ENCODE measurements at regions of chr4 and their contacts with region 1.

Region 1: DNA sequence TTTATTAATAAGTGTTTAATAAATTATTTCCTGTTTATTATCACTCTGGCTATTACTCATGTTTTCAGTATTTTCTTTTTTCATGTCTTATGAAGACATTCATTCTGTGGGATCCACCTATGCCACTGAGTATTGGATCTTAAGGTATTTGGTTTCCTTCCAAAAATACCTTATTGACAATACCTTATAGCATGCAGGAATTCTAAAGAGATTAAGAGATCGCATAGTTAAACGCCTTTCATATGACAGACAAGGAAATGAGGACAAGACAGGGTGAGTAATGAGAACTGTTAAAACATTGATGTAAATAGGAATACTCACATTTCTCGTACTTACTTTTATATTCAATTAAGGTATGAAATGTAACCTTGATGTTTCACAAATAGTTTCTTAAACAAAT is 38.2 kb upstream of the TMPRSS11B start:
- DNase-seq: no peak
- H3K4me3 ChIP-seq: no peak overlapping the region
- H3K27ac ChIP-seq: no peak overlapping the region
- H3K4me1 ChIP-seq: no peaks in the 10 kb centered on the region
- H3K27me3 ChIP-seq: no peaks in the 10 kb centered on the region
- CTCF ChIP-seq: no peak
- POLR2A ChIP-seq: no peak

Region 2: GRCh38 chr4:67531379-67531962 is 752.2 kb before region 1 on chr4:
- intact Hi-C with region 1: loop called (anchors 5 kb)
- DNase-seq: no peak
- H3K4me3 ChIP-seq: no peak overlapping the region
- H3K27ac ChIP-seq: no peak overlapping the region
- H3K4me1 ChIP-seq: no peaks in the 10 kb centered on the region
- H3K27me3 ChIP-seq: no peaks in the 10 kb centered on the region
- CTCF ChIP-seq: no peak
- POLR2A ChIP-seq: no peak

Region 3: DNA sequence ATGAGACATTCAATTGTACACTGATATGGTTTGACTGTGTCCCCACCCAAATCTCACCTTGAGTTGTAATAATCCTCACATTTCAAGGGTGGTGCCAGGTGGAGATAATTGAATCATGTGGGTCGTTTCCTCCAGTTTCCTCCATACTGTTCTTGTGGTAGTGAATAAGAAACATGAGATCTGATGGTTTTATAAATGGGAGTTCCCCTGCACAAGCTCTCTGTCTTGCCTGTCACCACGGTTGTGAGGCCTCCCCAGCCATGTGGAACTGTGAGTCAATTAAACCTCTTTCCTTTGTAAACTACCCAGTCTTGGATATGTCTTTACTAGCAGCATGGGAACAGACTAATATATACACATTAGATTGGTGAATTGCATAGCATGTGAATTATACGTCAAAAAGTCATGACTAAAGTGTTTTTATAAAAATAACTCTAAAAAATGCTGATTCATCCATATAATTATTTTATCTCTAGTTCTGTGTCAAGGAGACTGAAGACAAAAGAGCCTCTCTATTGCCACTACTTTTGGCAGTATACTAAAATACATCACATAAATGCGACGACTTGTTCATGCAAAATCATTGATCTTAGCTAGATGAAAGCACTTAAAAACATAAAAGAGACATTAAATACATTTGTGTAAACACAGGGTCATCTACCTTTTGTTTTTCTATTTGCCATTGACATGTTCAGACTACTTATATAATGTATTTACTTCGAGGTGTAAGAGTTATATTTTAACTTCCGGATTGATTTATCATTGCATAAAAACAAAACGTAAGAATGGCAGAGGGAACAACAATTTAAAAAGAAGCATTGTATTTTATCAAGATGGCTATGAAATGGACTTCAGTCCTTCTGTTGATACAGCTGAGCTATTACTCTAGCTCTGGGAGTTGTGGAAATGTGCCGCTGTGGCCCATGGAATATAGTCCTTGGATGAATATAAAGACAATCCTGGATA is 16.1 kb after region 1 on chr4:
- intact Hi-C with region 1: no loop called
- DNase-seq: no peak
- H3K4me3 ChIP-seq: no peak overlapping the region
- H3K27ac ChIP-seq: no peak overlapping the region
- H3K4me1 ChIP-seq: no peaks in the 10 kb centered on the region
- H3K27me3 ChIP-seq: no peaks in the 10 kb centered on the region
- CTCF ChIP-seq: no peak
- POLR2A ChIP-seq: no peak

Measured in breast epithelium (tissue), 4 donors.